ENCODE measurements at regions of chr22 and their contacts with region 1.

Region 1: GRCh38 chr22:40982482-40983385 is 31.6 kb downstream of the RBX1 start:
- DNase-seq: no peak
- H3K4me3 ChIP-seq: no peak overlapping the region
- H3K27ac ChIP-seq: no peak overlapping the region
- H3K4me1 ChIP-seq: no peaks in the 10 kb centered on the region
- H3K27me3 ChIP-seq: no peaks in the 10 kb centered on the region
- CTCF ChIP-seq: no peak

Region 2: DNA sequence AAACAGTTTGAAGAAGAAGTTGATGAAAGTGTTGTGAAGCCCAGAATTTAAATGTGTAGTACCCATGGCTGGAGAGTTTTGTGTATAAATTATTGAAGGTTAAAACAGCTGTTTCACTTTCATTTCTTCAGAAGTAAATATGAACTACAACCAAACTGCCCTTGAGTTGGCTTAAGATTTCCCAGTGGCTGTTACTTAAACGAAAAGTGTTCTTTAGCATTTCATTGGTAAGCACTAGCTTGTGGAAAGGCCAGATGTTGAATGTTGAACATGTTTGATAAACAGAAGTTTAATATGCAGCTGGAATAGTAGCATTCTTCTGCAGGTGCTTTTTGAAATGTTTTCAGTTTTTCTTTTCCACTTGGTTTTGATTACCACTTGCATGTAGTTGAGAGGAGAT is 888.2 kb before region 1 on chr22:
- CTCF ChIA-PET with region 1: interaction called, 15 read pairs
- dilution Hi-C with region 1: no loop called
- in situ Hi-C with region 1: no loop called
- intact Hi-C with region 1: no loop called
- DNase-seq: no peak
- H3K4me3 ChIP-seq: no peak overlapping the region
- H3K27ac ChIP-seq: no peak overlapping the region
- H3K4me1 ChIP-seq: no peaks in the 10 kb centered on the region
- H3K27me3 ChIP-seq: no peaks in the 10 kb centered on the region
- CTCF ChIP-seq: no peak

Region 3: GRCh38 chr22:40721266-40721665 is 261.5 kb before region 1 on chr22:
- CTCF ChIA-PET with region 1: no interaction called
- dilution Hi-C with region 1: no loop called
- in situ Hi-C with region 1: no loop called
- intact Hi-C with region 1: no loop called
- DNase-seq: peak; percentile 11
- H3K4me3 ChIP-seq: no peak overlapping the region
- H3K27ac ChIP-seq: no peak overlapping the region
- H3K4me1 ChIP-seq: peaks cover 4% of the 10 kb centered on the region
- H3K27me3 ChIP-seq: no peaks in the 10 kb centered on the region
- CTCF ChIP-seq: no peak

Region 4: DNA sequence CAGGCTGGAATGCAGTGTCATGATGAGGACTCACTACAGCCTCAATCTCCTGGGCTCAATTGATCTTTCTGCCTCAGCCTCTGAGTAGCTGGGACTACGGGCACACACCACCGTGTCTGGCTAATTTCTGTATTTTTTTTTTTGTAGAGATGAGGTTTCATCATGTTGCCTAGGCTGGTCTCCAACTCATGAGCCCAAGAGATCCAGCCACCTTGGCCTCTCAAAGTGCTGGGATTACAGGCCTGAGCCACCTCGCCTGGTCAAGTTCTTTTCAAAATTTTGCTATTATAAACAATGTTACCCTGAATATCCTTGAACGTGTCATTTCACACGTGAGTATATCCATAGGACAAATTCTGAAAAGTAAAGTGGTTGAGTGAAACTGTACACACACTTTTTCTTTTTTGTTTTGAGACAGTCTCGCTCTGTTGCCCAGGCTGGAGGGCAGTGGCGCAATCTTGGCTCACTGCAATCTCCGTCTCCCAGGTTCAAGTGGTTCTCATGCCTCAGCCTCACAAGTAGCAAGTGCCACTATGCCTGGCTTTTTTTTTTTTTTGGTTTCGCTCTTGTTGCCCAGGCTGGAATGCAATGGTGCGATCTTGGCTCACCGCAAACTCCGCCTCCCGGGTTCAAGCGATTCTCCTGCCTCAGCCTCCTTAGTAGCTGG is 88.1 kb after region 1 on chr22:
- CTCF ChIA-PET with region 1: no interaction called
- dilution Hi-C with region 1: loop called (anchors 5 kb)
- in situ Hi-C with region 1: no loop called
- intact Hi-C with region 1: no loop called
- DNase-seq: no peak
- H3K4me3 ChIP-seq: no peak overlapping the region
- H3K27ac ChIP-seq: no peak overlapping the region
- H3K4me1 ChIP-seq: no peaks in the 10 kb centered on the region
- H3K27me3 ChIP-seq: no peaks in the 10 kb centered on the region
- CTCF ChIP-seq: no peak